B cell (primary cell): ENCODE measurements at regions of chr12 and their contacts with region 1.

Region 1: GRCh38 chr12:13211859-13212664 is 15.5 kb downstream of the EMP1 start:
- DNase-seq: peak; percentile 82
- ATAC-seq: peak; percentile 65
- H3K4me3 ChIP-seq: no peak overlapping the region
- H3K4me3 Mint-ChIP-seq: no peak overlapping the region
- H3K27ac ChIP-seq: no peak overlapping the region
- H3K27ac Mint-ChIP-seq: no peak overlapping the region
- H3K4me1 ChIP-seq: peaks cover 3 to 4% of the 10 kb centered on the region in 2 donors
- H3K4me1 Mint-ChIP-seq: peaks cover 5% of the 10 kb centered on the region
- H3K27me3 ChIP-seq: peaks cover 0 to 6% (median 3%) of the 10 kb centered on the region in 4 experiments
- H3K27me3 Mint-ChIP-seq: peaks cover 33% of the 10 kb centered on the region
- CTCF ChIP-seq: peak; percentile 87

Region 2: DNA sequence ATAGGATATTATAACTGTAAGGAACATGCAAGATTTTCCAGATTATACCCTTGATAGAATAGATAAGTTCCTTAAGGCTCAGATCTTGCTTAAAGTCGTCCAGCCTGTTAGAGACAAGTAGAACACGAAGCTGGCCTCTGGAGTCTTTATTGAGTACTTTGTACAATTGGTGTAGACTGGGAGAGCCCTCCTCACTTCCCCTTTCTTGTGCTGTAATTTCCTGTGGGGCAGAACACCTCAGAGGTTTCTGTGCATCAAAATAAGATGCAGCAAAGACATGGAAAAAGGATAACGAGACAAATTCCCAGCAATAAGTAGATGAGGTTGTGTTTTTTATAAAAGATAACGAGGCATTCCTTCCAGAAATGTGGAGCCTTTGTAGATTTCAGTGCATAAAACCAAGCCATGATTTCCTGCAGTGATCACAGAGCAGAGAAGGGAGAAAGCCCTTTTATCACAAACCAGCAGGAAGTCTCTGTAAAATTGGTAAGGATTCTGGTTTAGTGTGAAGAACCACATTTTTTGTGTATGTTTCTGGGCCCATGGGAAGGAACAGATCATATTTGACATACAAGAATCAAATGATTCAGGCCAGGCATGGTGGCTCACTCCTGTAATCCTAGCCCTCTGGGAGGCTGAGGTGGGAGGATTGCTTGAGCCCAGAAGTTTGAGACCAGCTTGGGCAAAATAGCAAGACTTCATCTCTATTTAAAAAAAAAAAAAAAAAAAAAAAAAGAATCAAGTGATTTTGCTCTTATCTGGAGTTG is 302.7 kb before region 1 on chr12:
- CTCF ChIA-PET with region 1: interaction called, 275 read pairs
- POLR2A ChIA-PET with region 1: no interaction called
- intact Hi-C with region 1: no loop called
- DNase-seq: peak; percentile 52
- ATAC-seq: peak; percentile 62
- H3K4me3 ChIP-seq: no peak overlapping the region
- H3K4me3 Mint-ChIP-seq: peak overlapping the region; percentile 9
- H3K27ac ChIP-seq: no peak overlapping the region
- H3K27ac Mint-ChIP-seq: peak overlapping the region; percentile 18
- H3K4me1 ChIP-seq: peaks cover 17 to 20% of the 10 kb centered on the region in 2 donors
- H3K4me1 Mint-ChIP-seq: peaks cover 18% of the 10 kb centered on the region
- H3K27me3 ChIP-seq: no peaks in the 10 kb centered on the region
- H3K27me3 Mint-ChIP-seq: no peaks in the 10 kb centered on the region
- CTCF ChIP-seq: no peak

Region 3: DNA sequence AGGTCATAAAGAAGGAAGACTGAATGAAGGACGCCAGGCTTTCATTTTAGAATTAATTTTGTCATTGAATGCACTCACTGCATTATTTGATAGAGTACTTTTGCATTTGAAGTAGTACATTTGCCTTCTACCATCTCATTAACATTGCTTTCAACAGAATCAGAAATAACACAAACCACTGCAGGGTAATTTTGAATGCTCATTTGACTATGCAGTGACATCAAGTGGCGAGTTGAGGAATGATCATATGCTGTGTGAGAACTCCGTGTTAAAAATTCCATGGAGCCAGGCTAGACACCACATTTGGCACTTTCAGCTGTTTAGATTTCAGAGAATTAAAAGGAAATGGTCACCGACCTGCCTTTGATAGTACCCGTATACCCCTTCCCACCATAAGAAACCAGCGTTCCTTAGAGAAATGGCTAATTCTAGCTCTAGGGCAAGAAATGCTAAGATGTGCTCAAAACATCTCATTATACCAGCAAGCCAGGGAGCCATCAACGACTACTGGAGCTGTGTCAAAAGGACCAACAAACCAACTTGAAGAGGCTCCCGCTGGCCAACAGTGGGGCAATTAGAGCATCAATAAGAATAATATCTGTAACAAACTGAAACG is 228.5 kb before region 1 on chr12:
- CTCF ChIA-PET with region 1: interaction called, 22 read pairs
- POLR2A ChIA-PET with region 1: no interaction called
- intact Hi-C with region 1: no loop called
- DNase-seq: no peak
- ATAC-seq: no peak
- H3K4me3 ChIP-seq: no peak overlapping the region
- H3K4me3 Mint-ChIP-seq: no peak overlapping the region
- H3K27ac ChIP-seq: no peak overlapping the region
- H3K27ac Mint-ChIP-seq: no peak overlapping the region
- H3K4me1 ChIP-seq: no peaks in the 10 kb centered on the region
- H3K4me1 Mint-ChIP-seq: no peaks in the 10 kb centered on the region
- H3K27me3 ChIP-seq: no peaks in the 10 kb centered on the region
- H3K27me3 Mint-ChIP-seq: no peaks in the 10 kb centered on the region
- CTCF ChIP-seq: peak; percentile 21

Region 4: GRCh38 chr12:13023811-13024530 is 188.1 kb before region 1 on chr12:
- CTCF ChIA-PET with region 1: interaction called, 60 read pairs
- POLR2A ChIA-PET with region 1: no interaction called
- intact Hi-C with region 1: loop called (anchors 1 kb)
- DNase-seq: no peak
- ATAC-seq: no peak
- H3K4me3 ChIP-seq: no peak overlapping the region
- H3K4me3 Mint-ChIP-seq: no peak overlapping the region
- H3K27ac ChIP-seq: no peak overlapping the region
- H3K27ac Mint-ChIP-seq: no peak overlapping the region
- H3K4me1 ChIP-seq: no peaks in the 10 kb centered on the region
- H3K4me1 Mint-ChIP-seq: peaks cover 3% of the 10 kb centered on the region
- H3K27me3 ChIP-seq: peaks cover 0 to 3% (median 1%) of the 10 kb centered on the region in 4 experiments
- H3K27me3 Mint-ChIP-seq: peaks cover 39% of the 10 kb centered on the region
- CTCF ChIP-seq: no peak

Region 5: GRCh38 chr12:13100882-13101769 is 110.9 kb before region 1 on chr12:
- CTCF ChIA-PET with region 1: interaction called, 108 read pairs
- POLR2A ChIA-PET with region 1: no interaction called
- intact Hi-C with region 1: loop called (anchors 1 kb)
- DNase-seq: peak; percentile 97
- ATAC-seq: peak; percentile 77
- H3K4me3 ChIP-seq: peak overlapping the region; percentile 39 to 82 (median 71)
- H3K4me3 Mint-ChIP-seq: peak overlapping the region; percentile 88
- H3K27ac ChIP-seq: peak overlapping the region; percentile 97 to 99
- H3K27ac Mint-ChIP-seq: peak overlapping the region; percentile 96
- H3K4me1 ChIP-seq: peaks cover 52 to 63% of the 10 kb centered on the region in 2 donors
- H3K4me1 Mint-ChIP-seq: peaks cover 62% of the 10 kb centered on the region
- H3K27me3 ChIP-seq: no peaks in the 10 kb centered on the region
- H3K27me3 Mint-ChIP-seq: no peaks in the 10 kb centered on the region
- CTCF ChIP-seq: no peak

Region 6: DNA sequence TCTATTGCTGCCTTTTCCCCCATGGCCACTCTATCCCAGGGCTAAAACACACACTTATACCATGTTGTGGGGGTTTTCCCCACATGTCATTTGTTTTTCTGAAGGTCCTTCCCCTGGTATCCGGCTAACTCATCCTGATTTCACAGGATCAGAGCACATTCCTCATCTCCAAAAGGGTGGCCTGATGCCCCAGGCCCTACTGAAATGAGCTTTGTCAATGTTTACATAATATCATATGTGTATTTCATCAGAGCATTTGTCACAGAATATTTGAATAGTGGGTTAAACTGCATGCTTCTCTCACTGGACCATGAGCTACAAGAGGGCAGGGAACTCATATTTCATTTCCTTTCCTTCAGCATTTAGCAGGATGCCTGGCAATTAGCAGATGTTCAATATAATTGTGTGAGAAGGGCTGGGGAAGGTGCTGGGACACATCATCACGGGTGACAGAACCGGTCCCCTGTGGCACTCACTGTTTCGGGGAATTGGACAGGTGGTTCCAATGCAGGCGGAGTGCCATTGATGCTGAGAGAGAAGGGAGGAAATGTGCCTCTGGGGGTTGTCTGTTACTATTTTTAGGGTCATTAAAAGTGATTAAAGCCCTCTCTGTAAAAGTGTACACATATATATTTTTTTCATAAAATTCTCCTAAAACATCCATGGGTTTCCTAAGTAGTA is 11.3 kb after region 1 on chr12:
- CTCF ChIA-PET with region 1: interaction called, 29 read pairs
- POLR2A ChIA-PET with region 1: no interaction called
- intact Hi-C with region 1: no loop called
- DNase-seq: no peak
- ATAC-seq: no peak
- H3K4me3 ChIP-seq: no peak overlapping the region
- H3K4me3 Mint-ChIP-seq: no peak overlapping the region
- H3K27ac ChIP-seq: no peak overlapping the region
- H3K27ac Mint-ChIP-seq: no peak overlapping the region
- H3K4me1 ChIP-seq: no peaks in the 10 kb centered on the region
- H3K4me1 Mint-ChIP-seq: no peaks in the 10 kb centered on the region
- H3K27me3 ChIP-seq: no peaks in the 10 kb centered on the region
- H3K27me3 Mint-ChIP-seq: peaks cover 49% of the 10 kb centered on the region
- CTCF ChIP-seq: no peak

Region 7: DNA sequence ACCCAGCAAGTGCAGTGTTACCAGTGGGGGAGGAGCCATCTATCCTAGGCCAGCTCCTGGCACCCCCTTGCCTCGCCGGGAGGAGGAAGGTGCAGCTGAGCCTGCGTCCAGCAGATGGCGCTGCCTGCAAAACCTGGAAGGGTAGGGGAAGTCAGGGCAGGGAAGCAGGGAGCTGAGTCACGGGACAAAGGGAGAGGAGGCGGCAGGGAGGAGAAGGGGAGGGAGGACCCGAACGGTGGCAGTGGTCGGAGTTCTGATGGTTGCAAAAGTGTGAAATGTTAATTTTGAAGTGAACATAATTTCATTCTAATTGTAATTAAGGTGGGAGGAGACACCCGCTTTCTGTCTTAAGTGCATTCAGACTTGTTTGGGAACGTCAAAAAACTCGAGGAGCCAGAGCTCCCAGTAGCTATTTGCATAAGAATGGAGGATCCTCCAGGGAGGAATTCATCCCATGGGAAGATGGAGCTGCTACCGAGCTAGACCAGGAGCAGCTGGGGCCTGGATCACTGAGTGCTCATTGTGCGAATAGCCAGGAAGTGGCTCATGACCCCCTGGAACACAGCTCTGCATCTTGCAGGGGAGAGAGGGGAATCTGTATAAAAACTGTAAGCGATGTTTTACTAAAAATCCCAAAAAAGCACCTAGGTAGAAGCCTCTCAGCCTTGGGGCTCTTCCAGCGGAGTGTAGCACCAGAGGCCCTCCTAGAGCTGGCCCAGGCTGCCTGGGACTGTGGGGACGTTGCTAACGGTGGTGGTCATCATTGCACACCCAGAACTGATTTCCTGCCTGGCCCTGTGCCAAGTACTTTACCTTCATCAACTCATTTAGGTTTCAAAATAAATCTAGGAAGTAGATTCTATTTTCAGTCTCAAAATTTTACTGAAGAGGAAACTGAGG is 44.0 kb after region 1 on chr12:
- CTCF ChIA-PET with region 1: interaction called, 21 read pairs
- POLR2A ChIA-PET with region 1: no interaction called
- intact Hi-C with region 1: no loop called
- DNase-seq: peak; percentile 75
- ATAC-seq: peak; percentile 96
- H3K4me3 ChIP-seq: no peak overlapping the region
- H3K4me3 Mint-ChIP-seq: peak overlapping the region; percentile 33
- H3K27ac ChIP-seq: no peak overlapping the region
- H3K27ac Mint-ChIP-seq: no peak overlapping the region
- H3K4me1 ChIP-seq: peaks cover 3 to 4% of the 10 kb centered on the region in 2 donors
- H3K4me1 Mint-ChIP-seq: peaks cover 4% of the 10 kb centered on the region
- H3K27me3 ChIP-seq: peaks cover 0 to 3% (median 0%) of the 10 kb centered on the region in 4 experiments
- H3K27me3 Mint-ChIP-seq: peaks cover 14% of the 10 kb centered on the region
- CTCF ChIP-seq: peak; percentile 96

Region 8: DNA sequence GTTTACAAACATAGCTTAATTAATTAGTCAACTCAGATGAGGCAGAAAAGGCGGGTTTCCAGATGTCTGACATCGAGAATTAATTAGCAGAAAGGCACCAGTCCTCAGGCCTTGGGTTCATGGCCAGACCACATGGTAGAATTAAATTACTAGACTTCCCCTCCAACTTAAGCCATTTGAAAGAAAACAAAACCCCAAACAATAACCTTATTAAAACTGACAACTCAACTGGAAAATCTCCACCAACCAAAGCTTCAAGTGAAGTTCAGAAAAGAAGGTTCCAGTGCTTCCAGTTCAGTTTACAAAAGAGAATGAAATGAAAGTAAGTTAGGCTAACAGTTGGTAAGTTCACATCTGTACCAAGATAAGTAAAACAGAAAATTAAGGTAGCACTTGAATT is 419.8 kb after region 1 on chr12:
- CTCF ChIA-PET with region 1: no interaction called
- POLR2A ChIA-PET with region 1: no interaction called
- intact Hi-C with region 1: no loop called
- DNase-seq: no peak
- ATAC-seq: no peak
- H3K4me3 ChIP-seq: no peak overlapping the region
- H3K4me3 Mint-ChIP-seq: no peak overlapping the region
- H3K27ac ChIP-seq: no peak overlapping the region
- H3K27ac Mint-ChIP-seq: no peak overlapping the region
- H3K4me1 ChIP-seq: no peaks in the 10 kb centered on the region
- H3K4me1 Mint-ChIP-seq: no peaks in the 10 kb centered on the region
- H3K27me3 ChIP-seq: no peaks in the 10 kb centered on the region
- H3K27me3 Mint-ChIP-seq: peaks cover 3% of the 10 kb centered on the region
- CTCF ChIP-seq: no peak